ENCODE measurements at regions of chr2 and their contacts with region 1.

Region 1: GRCh38 chr2:101205521-101205998 is 47.1 kb upstream of the CNOT11 start:
- DNase-seq: peak; percentile 60 to 78 (median 76)
- H3K4me3 ChIP-seq: peak overlapping the region in 2 of 3 experiments; percentile 14 to 68
- H3K4me3 Mint-ChIP-seq: peak overlapping the region; percentile 34 to 75
- H3K27ac ChIP-seq: peak overlapping the region in 1 of 2 donors; percentile 48
- H3K27ac Mint-ChIP-seq: peak overlapping the region in 2 of 7 donors; percentile 41 to 46
- H3K4me1 ChIP-seq: peaks cover 14 to 22% of the 10 kb centered on the region in 2 donors
- H3K4me1 Mint-ChIP-seq: peaks cover 25% of the 10 kb centered on the region
- H3K27me3 ChIP-seq: no peaks in the 10 kb centered on the region
- H3K27me3 Mint-ChIP-seq: peaks cover 0 to 4% (median 2%) of the 10 kb centered on the region in 3 donors
- CTCF ChIP-seq: peak; percentile 61

Region 2: GRCh38 chr2:101012706-101013181 is 192.8 kb before region 1 on chr2:
- intact Hi-C with region 1: loop called (anchors 2 to 5 kb)
- DNase-seq: peak; percentile 32 to 47 (median 34)
- H3K4me3 ChIP-seq: no peak overlapping the region
- H3K4me3 Mint-ChIP-seq: no peak overlapping the region
- H3K27ac ChIP-seq: no peak overlapping the region
- H3K27ac Mint-ChIP-seq: peak overlapping the region in 1 of 7 donors; percentile 37
- H3K4me1 ChIP-seq: no peaks in the 10 kb centered on the region
- H3K4me1 Mint-ChIP-seq: peaks cover 3% of the 10 kb centered on the region
- H3K27me3 ChIP-seq: no peaks in the 10 kb centered on the region
- H3K27me3 Mint-ChIP-seq: no peaks in the 10 kb centered on the region
- CTCF ChIP-seq: peak; percentile 90

Region 3: GRCh38 chr2:101036562-101037457 is 168.8 kb before region 1 on chr2:
- intact Hi-C with region 1: loop called in 1 of 2 experiments (anchors 5 kb)
- DNase-seq: peak in 1 of 3 donors; percentile 17
- H3K4me3 ChIP-seq: no peak overlapping the region
- H3K4me3 Mint-ChIP-seq: no peak overlapping the region
- H3K27ac ChIP-seq: no peak overlapping the region
- H3K27ac Mint-ChIP-seq: peak overlapping the region in 1 of 7 donors; percentile 54
- H3K4me1 ChIP-seq: peaks cover 35 to 38% of the 10 kb centered on the region in 2 donors
- H3K4me1 Mint-ChIP-seq: peaks cover 40% of the 10 kb centered on the region
- H3K27me3 ChIP-seq: no peaks in the 10 kb centered on the region
- H3K27me3 Mint-ChIP-seq: peaks cover 0 to 2% (median 0%) of the 10 kb centered on the region in 3 donors
- CTCF ChIP-seq: peak; percentile 64

Region 4: DNA sequence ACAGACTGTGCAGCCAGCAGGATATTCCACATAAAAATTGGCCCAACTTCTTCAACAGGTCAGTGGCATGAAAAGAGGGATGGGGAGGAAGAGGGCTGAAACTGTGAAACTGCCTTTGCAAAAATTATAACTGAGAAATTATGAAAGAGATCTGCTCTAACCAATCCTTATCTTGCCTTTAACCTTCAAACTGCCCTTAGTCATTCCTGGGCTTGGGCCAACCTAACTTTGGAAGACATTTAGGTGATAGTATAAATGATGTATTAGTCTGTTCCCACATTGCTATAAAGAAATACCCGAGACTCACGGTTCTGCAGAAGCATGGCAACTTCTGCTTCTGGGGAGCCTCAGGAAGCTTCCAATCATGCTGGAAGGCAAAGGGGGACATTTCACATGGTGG is 129.0 kb before region 1 on chr2:
- intact Hi-C with region 1: no loop called
- DNase-seq: no peak
- H3K4me3 ChIP-seq: no peak overlapping the region
- H3K4me3 Mint-ChIP-seq: no peak overlapping the region
- H3K27ac ChIP-seq: no peak overlapping the region
- H3K27ac Mint-ChIP-seq: no peak overlapping the region
- H3K4me1 ChIP-seq: no peaks in the 10 kb centered on the region
- H3K4me1 Mint-ChIP-seq: peaks cover 5% of the 10 kb centered on the region
- H3K27me3 ChIP-seq: no peaks in the 10 kb centered on the region
- H3K27me3 Mint-ChIP-seq: no peaks in the 10 kb centered on the region
- CTCF ChIP-seq: no peak

Region 5: DNA sequence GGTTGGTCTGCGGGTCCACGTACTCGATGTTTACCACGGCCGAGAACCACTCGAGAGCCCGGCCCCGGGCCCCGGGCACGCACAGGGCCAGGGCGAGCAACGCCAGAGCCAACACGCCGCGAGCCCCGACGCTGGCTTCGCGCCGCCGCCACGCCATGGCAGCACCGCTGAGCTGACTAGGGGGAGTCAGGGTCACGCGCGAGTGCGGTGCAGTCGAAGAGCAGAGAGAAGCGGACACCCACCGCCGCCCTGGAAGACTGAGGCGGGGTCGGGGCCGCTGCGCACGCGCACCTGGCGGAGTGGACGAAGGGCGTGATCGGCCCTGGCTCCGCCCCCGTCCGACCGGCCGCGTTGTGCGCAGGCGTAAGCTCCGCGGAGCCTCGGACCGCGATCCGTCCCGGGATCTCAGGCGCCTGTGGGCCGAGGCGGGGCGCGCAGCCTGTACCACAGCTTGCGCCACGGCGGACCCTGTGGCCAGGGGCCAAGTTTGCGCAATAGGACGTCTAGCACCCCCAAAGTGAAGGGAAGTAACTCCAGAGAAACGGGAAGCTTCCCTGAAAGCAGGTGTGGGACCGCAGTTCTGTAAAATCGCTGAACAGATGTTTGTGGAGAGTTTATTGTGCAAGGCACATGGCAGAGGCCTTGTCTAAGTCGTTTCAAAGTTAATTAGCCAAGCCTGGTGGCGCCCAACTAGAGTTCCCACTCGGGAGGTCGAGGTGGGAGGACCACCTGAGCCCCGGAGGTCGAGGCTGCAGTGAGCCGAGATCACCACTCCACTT is 103.1 kb after region 1 on chr2 and contains the start of gene RNF149:
- intact Hi-C with region 1: no loop called
- DNase-seq: peak; percentile 99
- H3K4me3 ChIP-seq: peak within 1 kb of the TSS; percentile 91 to 98 (median 98)
- H3K4me3 Mint-ChIP-seq: peak within 1 kb of the TSS; percentile 94 to 98
- H3K27ac ChIP-seq: peak within 1 kb of the TSS; percentile 94 to 96
- H3K27ac Mint-ChIP-seq: peak within 1 kb of the TSS; percentile 92 to 99 (median 95)
- H3K4me1 ChIP-seq: peaks cover 64 to 68% of the 10 kb centered on the region in 2 donors
- H3K4me1 Mint-ChIP-seq: peaks cover 69% of the 10 kb centered on the region
- H3K27me3 ChIP-seq: no peaks in the 10 kb centered on the region
- H3K27me3 Mint-ChIP-seq: peaks cover 0 to 3% (median 0%) of the 10 kb centered on the region in 3 donors
- CTCF ChIP-seq: no peak
- polyA plus RNA-seq, gene RNF149: 112 to 148 (median 141) TPM